CD4-positive, alpha-beta T cell (primary cell): ENCODE measurements at regions of chr5 and their contacts with region 1.

Region 1: DNA sequence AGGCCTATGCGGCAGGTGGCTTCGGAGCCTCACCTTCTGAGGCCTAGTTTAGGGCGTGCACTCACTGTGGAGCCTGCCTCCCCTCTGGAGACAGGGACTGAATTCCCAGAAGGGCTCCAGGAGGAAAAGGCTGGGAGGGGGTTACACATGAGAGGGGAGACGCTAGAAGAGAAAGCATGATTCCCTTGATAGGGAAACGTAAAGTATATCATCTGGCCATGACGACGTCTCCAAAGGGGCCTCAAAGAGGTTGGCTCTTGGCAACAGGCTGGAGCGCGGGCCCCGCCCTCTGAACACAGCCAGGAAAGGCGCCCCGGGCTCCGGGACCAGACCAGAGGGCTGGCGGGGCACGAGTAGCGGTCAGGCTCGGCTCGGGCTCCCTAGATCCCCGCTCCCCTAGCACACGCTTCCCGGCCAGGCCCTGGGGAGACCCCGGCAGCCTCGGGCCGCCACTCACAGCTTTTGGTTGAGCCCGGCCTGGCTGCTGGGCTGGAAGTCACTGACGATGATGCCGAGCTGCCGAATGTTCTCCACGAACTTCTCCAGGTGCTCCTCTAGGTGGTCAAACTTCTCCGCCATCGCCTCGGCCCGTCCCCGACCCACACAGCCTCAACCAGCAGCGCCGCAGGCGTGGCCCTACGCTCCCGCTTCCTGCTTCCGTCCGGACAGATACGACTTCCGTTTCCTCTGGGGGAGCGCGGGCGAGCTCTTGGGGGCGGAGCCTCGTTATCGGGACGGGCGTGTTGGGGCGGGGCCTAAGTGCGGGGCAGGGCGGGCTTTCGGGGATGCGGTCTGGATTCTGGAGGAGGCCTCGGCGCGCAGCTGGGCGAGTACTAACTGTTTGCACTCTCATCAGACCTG is at the start of gene MED10:
- DNase-seq: peak; percentile 90 to 97 (median 95)
- ATAC-seq: peak; percentile 95
- H3K4me3 ChIP-seq: peak within 1 kb of the TSS; percentile 94
- H3K4me3 Mint-ChIP-seq: peak within 1 kb of the TSS; percentile 100
- H3K27ac ChIP-seq: peak within 1 kb of the TSS; percentile 83 to 88
- H3K27ac Mint-ChIP-seq: peak within 1 kb of the TSS; percentile 98
- H3K4me1 ChIP-seq: peaks cover 38% of the 10 kb centered on the region
- H3K4me1 Mint-ChIP-seq: peaks cover 62% of the 10 kb centered on the region
- H3K27me3 ChIP-seq: no peaks in the 10 kb centered on the region
- H3K27me3 Mint-ChIP-seq: no peaks in the 10 kb centered on the region
- CTCF ChIP-seq: no peak
- total RNA-seq, gene MED10: 97.2 to 98.0 TPM

Region 2: DNA sequence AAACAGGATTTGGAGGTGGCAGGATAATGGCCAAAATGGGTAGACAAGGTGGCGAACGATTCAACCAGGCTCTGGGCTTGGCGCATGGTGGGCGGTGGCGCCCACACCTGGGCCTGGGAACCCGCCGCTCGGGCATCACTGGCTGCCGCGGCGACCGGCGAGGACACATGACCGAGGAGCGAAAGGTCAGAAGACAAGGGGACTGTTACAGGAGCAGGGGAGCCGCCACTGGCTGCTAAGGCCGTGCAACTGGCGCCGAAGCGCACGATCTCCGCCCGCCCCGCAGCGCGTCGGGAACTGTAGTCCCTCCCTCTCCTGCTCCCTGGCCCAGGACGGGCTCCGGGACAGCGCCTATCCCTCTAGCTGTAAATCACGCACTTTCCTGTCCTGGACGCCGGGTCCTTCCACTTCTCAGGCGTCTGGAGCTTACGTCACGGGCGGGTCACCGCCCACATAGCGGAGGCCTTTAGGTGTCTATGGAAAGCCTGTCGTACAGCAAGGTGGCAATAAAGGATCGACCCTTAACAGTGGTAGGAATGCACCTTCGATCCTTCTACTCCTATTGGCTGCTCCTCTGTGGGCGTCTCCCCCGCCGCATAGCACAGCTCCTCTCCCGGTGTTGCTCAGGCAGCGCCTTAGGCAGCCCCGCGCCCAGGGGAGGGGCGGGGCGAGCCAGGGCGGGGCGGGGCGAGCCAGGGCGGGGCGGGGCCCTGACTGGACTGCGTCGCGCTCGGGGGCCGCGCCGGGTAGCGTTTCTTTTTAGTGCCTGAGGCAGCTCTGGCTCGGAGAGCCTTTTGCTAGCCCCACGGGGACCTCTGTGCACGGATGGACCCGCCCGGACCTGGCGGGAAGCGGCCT is 955.9 kb before region 1 on chr5 and contains the start of gene ICE1:
- CTCF ChIA-PET with region 1: no interaction called
- POLR2A ChIA-PET with region 1: interaction called, 15 read pairs
- intact Hi-C with region 1: loop called (anchors 1 to 5 kb)
- DNase-seq: peak; percentile 88 to 98 (median 94)
- ATAC-seq: peak; percentile 87
- H3K4me3 ChIP-seq: peak within 1 kb of the TSS; percentile 79
- H3K4me3 Mint-ChIP-seq: peak within 1 kb of the TSS; percentile 98
- H3K27ac ChIP-seq: peak within 1 kb of the TSS; percentile 94 to 97
- H3K27ac Mint-ChIP-seq: no peak within 1 kb of the TSS
- H3K4me1 ChIP-seq: peaks cover 31% of the 10 kb centered on the region
- H3K4me1 Mint-ChIP-seq: peaks cover 26% of the 10 kb centered on the region
- H3K27me3 ChIP-seq: no peaks in the 10 kb centered on the region
- H3K27me3 Mint-ChIP-seq: no peaks in the 10 kb centered on the region
- CTCF ChIP-seq: no peak
- total RNA-seq, gene ICE1: 37.6 to 39.1 TPM

Region 3: GRCh38 chr5:6359555-6360322 is 18.4 kb before region 1 on chr5:
- CTCF ChIA-PET with region 1: no interaction called
- POLR2A ChIA-PET with region 1: interaction called, 22 read pairs
- intact Hi-C with region 1: loop called in 1 of 2 experiments (anchors 2 kb)
- DNase-seq: peak in 8 of 14 experiments; percentile 10 to 62 (median 30)
- ATAC-seq: peak; percentile 92
- H3K4me3 ChIP-seq: peak overlapping the region; percentile 16
- H3K4me3 Mint-ChIP-seq: peak overlapping the region; percentile 80
- H3K27ac ChIP-seq: peak overlapping the region; percentile 42 to 51
- H3K27ac Mint-ChIP-seq: peak overlapping the region; percentile 89
- H3K4me1 ChIP-seq: peaks cover 22% of the 10 kb centered on the region
- H3K4me1 Mint-ChIP-seq: peaks cover 22% of the 10 kb centered on the region
- H3K27me3 ChIP-seq: no peaks in the 10 kb centered on the region
- H3K27me3 Mint-ChIP-seq: no peaks in the 10 kb centered on the region
- CTCF ChIP-seq: no peak

Region 4: GRCh38 chr5:6603643-6604042 is 225.5 kb after region 1 on chr5:
- CTCF ChIA-PET with region 1: no interaction called
- POLR2A ChIA-PET with region 1: no interaction called
- intact Hi-C with region 1: no loop called
- DNase-seq: no peak
- ATAC-seq: no peak
- H3K4me3 ChIP-seq: no peak overlapping the region
- H3K4me3 Mint-ChIP-seq: no peak overlapping the region
- H3K27ac ChIP-seq: no peak overlapping the region
- H3K27ac Mint-ChIP-seq: no peak overlapping the region
- H3K4me1 ChIP-seq: no peaks in the 10 kb centered on the region
- H3K4me1 Mint-ChIP-seq: no peaks in the 10 kb centered on the region
- H3K27me3 ChIP-seq: no peaks in the 10 kb centered on the region
- H3K27me3 Mint-ChIP-seq: no peaks in the 10 kb centered on the region
- CTCF ChIP-seq: no peak

Region 5: DNA sequence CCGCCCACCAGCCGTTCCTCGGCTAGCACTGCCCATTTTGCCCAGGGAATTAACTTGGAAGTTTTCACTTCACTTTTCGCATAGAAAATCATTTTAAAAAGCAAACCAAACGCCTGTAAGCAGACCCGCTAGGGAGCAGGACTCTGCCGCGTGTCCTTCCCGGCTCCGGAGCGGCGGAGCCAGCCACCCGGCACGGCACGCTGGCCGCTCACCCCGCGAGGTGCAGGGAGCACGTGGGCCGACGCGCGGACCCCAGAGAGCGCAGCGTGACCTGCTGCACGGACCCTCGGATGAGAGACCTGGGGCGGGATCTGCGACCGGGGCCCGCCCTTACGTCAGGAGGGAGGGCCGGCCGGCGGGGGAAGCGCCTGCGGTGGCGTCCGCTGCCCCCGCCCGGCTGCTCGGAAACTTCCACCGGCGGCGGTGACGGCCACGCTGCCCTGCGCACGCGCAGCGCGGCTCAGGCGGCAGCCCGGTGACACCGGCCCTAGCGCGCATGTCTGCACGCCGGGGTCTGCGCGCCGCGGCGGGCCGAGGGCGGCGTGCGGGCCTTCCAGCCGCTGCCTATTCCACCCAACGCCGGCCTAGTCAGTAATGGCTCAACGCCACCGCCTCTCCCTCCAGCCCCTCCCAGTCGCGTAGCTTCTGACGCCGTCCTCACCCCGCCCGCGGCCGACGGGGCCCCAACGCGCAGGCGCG is 334.6 kb after region 1 on chr5:
- CTCF ChIA-PET with region 1: no interaction called
- POLR2A ChIA-PET with region 1: interaction called, 5 read pairs
- intact Hi-C with region 1: loop called in 1 of 2 experiments (anchors 2 kb)
- DNase-seq: peak in 9 of 14 experiments; percentile 94 to 99 (median 97)
- ATAC-seq: peak; percentile 71
- H3K4me3 ChIP-seq: peak overlapping the region; percentile 91
- H3K4me3 Mint-ChIP-seq: peak overlapping the region; percentile 95
- H3K27ac ChIP-seq: peak overlapping the region; percentile 72 to 84
- H3K27ac Mint-ChIP-seq: peak overlapping the region; percentile 78
- H3K4me1 ChIP-seq: peaks cover 34% of the 10 kb centered on the region
- H3K4me1 Mint-ChIP-seq: peaks cover 40% of the 10 kb centered on the region
- H3K27me3 ChIP-seq: no peaks in the 10 kb centered on the region
- H3K27me3 Mint-ChIP-seq: no peaks in the 10 kb centered on the region
- CTCF ChIP-seq: no peak

Region 6: GRCh38 chr5:7868773-7869473 is 1490.8 kb after region 1 on chr5 and contains the starts of genes FASTKD3 and MTRR:
- CTCF ChIA-PET with region 1: no interaction called
- POLR2A ChIA-PET with region 1: no interaction called
- intact Hi-C with region 1: loop called in 1 of 2 experiments (anchors 5 kb)
- DNase-seq: peak; percentile 76 to 94 (median 86)
- ATAC-seq: peak; percentile 99
- H3K4me3 ChIP-seq: peak within 1 kb of the TSS; percentile 86
- H3K4me3 Mint-ChIP-seq: peak within 1 kb of the TSS; percentile 93
- H3K27ac ChIP-seq: peak within 1 kb of the TSS; percentile 2 to 55
- H3K27ac Mint-ChIP-seq: peak within 1 kb of the TSS; percentile 90
- H3K4me1 ChIP-seq: peaks cover 39% of the 10 kb centered on the region
- H3K4me1 Mint-ChIP-seq: peaks cover 79% of the 10 kb centered on the region
- H3K27me3 ChIP-seq: no peaks in the 10 kb centered on the region
- H3K27me3 Mint-ChIP-seq: no peaks in the 10 kb centered on the region
- CTCF ChIP-seq: no peak
- total RNA-seq, gene FASTKD3: 2.6 to 3.4 TPM
- total RNA-seq, gene MTRR: 74.6 to 77.5 TPM